ENCODE measurements at regions of chr2 and their contacts with region 1.

Region 1: GRCh38 chr2:57185568-57185967 is 861.0 kb upstream of the VRK2 start:
- DNase-seq: no peak
- ATAC-seq: no peak

Region 2: DNA sequence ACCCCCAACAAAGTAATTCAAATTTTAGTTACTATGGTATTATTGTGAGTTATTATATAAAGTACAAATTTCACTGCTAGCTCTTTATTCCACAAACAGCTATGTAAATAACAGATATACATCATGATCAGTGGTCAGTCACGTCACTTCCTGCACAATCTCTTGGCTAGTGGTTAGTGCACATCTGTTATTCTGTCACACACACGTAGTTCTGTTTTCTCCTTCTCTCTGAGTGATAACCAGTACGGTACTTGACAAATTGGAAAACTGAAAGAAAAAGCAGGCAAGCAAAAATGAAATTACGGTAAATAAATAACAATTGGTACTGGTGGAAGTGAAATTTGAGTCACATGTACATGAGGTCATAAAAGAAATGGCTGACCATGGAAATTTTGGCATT is 273.1 kb before region 1 on chr2:
- intact Hi-C with region 1: no loop called
- DNase-seq: no peak
- ATAC-seq: no peak

Region 3: GRCh38 chr2:57218206-57218605 is 32.6 kb after region 1 on chr2:
- intact Hi-C with region 1: loop called (anchors 5 kb)
- DNase-seq: peak; percentile 73
- ATAC-seq: peak; percentile 95

Region 4: DNA sequence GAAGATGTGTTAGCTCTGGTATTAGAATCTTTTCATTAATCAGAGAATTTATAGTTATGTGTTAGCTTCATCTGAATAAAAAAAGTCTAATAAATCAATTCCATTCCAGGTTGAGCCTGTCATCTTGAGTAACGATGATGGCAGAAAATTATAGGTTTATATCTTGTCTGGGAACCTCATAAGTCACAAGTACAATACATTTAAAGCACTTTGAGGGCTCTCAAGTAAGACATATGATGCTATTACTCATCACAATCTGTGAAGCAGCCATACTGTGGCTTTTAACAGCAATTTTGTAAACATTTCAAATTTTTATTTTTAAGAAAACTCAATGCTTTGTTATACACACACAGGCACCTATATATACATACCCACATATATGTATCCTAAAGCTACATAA is 376.9 kb after region 1 on chr2:
- intact Hi-C with region 1: no loop called
- DNase-seq: no peak
- ATAC-seq: no peak

Measured in Right ventricle myocardium inferior (tissue), 1 donor.